IMR-90 (cell line): ENCODE measurements at regions of chr1 and their contacts with region 1.

Region 1: GRCh38 chr1:77126307-77126706 is 92.9 kb downstream of the PIGK start:
- DNase-seq: peak; percentile 80
- ATAC-seq: peak; percentile 88
- H3K4me3 ChIP-seq: no peak overlapping the region
- H3K27ac ChIP-seq: no peak overlapping the region
- H3K4me1 ChIP-seq: no peaks in the 10 kb centered on the region
- H3K27me3 ChIP-seq: no peaks in the 10 kb centered on the region
- CTCF ChIP-seq: peak; percentile 83
- POLR2A ChIP-seq: no peak
- RAD21 ChIP-seq: peak; percentile 93

Region 2: DNA sequence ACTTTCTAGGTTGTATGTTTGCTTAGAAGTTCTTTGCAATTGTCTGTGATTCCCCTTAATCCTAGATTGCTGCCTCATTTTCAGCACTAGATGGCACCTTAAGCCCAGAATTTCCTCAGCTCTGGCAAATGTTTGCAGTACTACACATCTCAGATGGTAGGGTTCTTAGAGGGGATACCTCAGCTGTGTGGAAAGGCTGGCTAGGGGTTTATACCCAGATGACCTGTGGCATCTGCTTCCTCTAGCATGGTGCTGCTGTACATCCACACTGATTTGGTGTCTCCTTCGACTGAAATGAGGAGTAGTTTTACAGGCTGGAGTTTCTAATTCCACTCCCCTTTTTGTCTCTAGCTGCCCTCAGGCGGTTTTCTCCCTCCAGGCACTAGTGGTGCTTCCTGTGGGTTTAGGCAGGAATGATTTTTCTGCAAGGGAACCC is 1217.6 kb before region 1 on chr1:
- CTCF ChIA-PET with region 1: no interaction called
- POLR2A ChIA-PET with region 1: no interaction called
- dilution Hi-C with region 1: no loop called
- in situ Hi-C with region 1: no loop called
- intact Hi-C with region 1: loop called (anchors 1 kb)
- DNase-seq: peak; percentile 50
- ATAC-seq: peak; percentile 91
- H3K4me3 ChIP-seq: no peak overlapping the region
- H3K27ac ChIP-seq: no peak overlapping the region
- H3K4me1 ChIP-seq: no peaks in the 10 kb centered on the region
- H3K27me3 ChIP-seq: no peaks in the 10 kb centered on the region
- CTCF ChIP-seq: peak; percentile 64
- POLR2A ChIP-seq: no peak
- RAD21 ChIP-seq: peak; percentile 68

Region 3: GRCh38 chr1:76901158-76901767 is 225.0 kb before region 1 on chr1:
- CTCF ChIA-PET with region 1: no interaction called
- POLR2A ChIA-PET with region 1: no interaction called
- dilution Hi-C with region 1: no loop called
- in situ Hi-C with region 1: loop called (anchors 10 kb)
- intact Hi-C with region 1: loop called (anchors 1 kb)
- DNase-seq: peak; percentile 58
- ATAC-seq: peak; percentile 86
- H3K4me3 ChIP-seq: no peak overlapping the region
- H3K27ac ChIP-seq: no peak overlapping the region
- H3K4me1 ChIP-seq: no peaks in the 10 kb centered on the region
- H3K27me3 ChIP-seq: no peaks in the 10 kb centered on the region
- CTCF ChIP-seq: peak; percentile 68
- POLR2A ChIP-seq: no peak
- RAD21 ChIP-seq: peak; percentile 65

Region 4: DNA sequence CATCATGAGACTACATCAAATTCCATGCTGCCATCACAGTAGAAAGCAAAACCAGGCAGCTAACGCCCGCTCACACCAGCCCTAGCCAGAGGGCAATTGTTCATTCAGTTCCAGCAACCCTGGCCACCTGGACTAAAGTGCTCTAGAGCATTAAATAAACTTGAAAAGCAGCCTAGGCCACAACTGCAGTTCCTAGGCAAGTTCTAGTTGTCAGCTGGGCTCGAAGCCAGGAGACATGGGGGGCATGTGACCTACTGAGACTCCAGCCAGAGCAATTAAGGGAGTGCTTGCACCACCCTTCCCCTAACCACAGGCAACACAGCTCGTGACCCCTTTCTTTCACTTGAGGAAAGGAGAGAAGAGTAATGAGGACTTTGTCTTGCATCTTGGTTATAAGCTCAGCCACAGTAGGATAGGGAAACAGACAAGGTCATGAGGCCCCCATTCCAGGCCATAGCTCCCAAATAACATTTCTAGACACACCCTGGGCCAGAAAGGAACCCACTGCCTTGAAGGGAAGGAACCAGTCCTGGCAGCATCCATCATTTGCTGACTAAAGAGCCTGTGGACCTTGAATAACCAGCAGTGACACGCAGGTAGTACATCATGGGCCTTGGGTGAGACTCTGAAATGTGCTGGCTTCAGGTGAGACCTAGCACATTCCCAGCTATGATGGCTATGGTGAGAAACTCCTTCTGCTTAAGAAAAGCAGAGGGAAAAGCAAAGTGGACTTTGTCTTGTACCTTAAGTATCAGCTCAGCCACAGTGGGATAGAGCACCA is 479.1 kb after region 1 on chr1:
- CTCF ChIA-PET with region 1: no interaction called
- POLR2A ChIA-PET with region 1: no interaction called
- dilution Hi-C with region 1: no loop called
- in situ Hi-C with region 1: no loop called
- intact Hi-C with region 1: no loop called
- DNase-seq: peak; percentile 38
- ATAC-seq: peak; percentile 45
- H3K4me3 ChIP-seq: no peak overlapping the region
- H3K27ac ChIP-seq: no peak overlapping the region; the same call in 1 of the 2 replicates
- H3K4me1 ChIP-seq: peaks cover 8% of the 10 kb centered on the region; the same call in 1 of the 2 replicates
- H3K27me3 ChIP-seq: no peaks in the 10 kb centered on the region
- CTCF ChIP-seq: no peak
- POLR2A ChIP-seq: no peak
- RAD21 ChIP-seq: no peak